Natural killer cell (primary cell): ENCODE measurements at regions of chrX and their contacts with region 1.

Region 1: GRCh38 chrX:24498975-24499374 is 33.9 kb downstream of the PDK3 start:
- DNase-seq: peak in 1 of 2 donors; percentile 67
- ATAC-seq: peak; percentile 77 to 88 (median 78)
- H3K4me3 ChIP-seq: peak overlapping the region; percentile 3
- H3K4me3 Mint-ChIP-seq: peak overlapping the region; percentile 55
- H3K27ac ChIP-seq: peak overlapping the region; percentile 54
- H3K27ac Mint-ChIP-seq: peak overlapping the region; percentile 73 to 83
- H3K4me1 ChIP-seq: peaks cover 13% of the 10 kb centered on the region
- H3K4me1 Mint-ChIP-seq: peaks cover 22 to 26% of the 10 kb centered on the region in 2 donors
- H3K27me3 ChIP-seq: no peaks in the 10 kb centered on the region
- H3K27me3 Mint-ChIP-seq: no peaks in the 10 kb centered on the region
- CTCF ChIP-seq: peak; percentile 30

Region 2: DNA sequence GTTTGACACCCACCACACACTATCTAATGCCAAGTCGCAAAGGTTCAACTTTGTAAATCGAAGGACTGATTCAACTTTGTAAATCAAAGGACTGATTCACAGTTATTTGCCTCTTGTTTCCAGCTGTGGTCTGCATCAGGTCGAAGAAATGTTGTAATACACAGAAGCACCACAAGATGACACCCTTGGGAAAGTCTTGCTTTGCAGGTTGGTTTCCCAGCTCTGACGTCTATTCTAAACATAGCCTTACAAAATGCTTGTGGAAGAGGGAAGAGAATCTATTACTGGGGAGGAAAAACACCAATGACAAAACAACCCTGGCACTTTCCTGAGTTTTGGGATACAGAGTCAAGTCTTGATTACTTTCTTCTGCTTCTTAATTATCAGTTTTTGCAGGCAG is 103.2 kb before region 1 on chrX:
- intact Hi-C with region 1: loop called (anchors 1 kb)
- DNase-seq: peak in 1 of 2 donors; percentile 81
- ATAC-seq: peak; percentile 65 to 93 (median 91)
- H3K4me3 ChIP-seq: no peak overlapping the region
- H3K4me3 Mint-ChIP-seq: no peak overlapping the region
- H3K27ac ChIP-seq: no peak overlapping the region
- H3K27ac Mint-ChIP-seq: peak overlapping the region in 1 of 2 donors; percentile 21
- H3K4me1 ChIP-seq: no peaks in the 10 kb centered on the region
- H3K4me1 Mint-ChIP-seq: peaks cover 0 to 5% of the 10 kb centered on the region in 2 donors
- H3K27me3 ChIP-seq: no peaks in the 10 kb centered on the region
- H3K27me3 Mint-ChIP-seq: peaks cover 6 to 50% of the 10 kb centered on the region in 2 donors
- CTCF ChIP-seq: peak; percentile 69

Region 3: GRCh38 chrX:24464836-24465531 is 34.0 kb before region 1 on chrX and contains the start of gene PDK3:
- intact Hi-C with region 1: loop called (anchors 2 kb)
- DNase-seq: peak; percentile 82 to 93
- ATAC-seq: peak; percentile 92 to 98 (median 94)
- H3K4me3 ChIP-seq: peak within 1 kb of the TSS; percentile 84
- H3K4me3 Mint-ChIP-seq: peak within 1 kb of the TSS; percentile 88
- H3K27ac ChIP-seq: peak within 1 kb of the TSS; percentile 96
- H3K27ac Mint-ChIP-seq: peak within 1 kb of the TSS; percentile 72 to 90
- H3K4me1 ChIP-seq: peaks cover 16% of the 10 kb centered on the region
- H3K4me1 Mint-ChIP-seq: peaks cover 27 to 32% of the 10 kb centered on the region in 2 donors
- H3K27me3 ChIP-seq: no peaks in the 10 kb centered on the region
- H3K27me3 Mint-ChIP-seq: no peaks in the 10 kb centered on the region
- CTCF ChIP-seq: no peak
- total RNA-seq, gene PDK3: 21.9 to 30.9 (median 28.1) TPM

Region 4: GRCh38 chrX:24479924-24480323 is 19.1 kb before region 1 on chrX:
- intact Hi-C with region 1: loop called (anchors 2 kb)
- DNase-seq: peak; percentile 56 to 92
- ATAC-seq: peak; percentile 88 to 97 (median 93)
- H3K4me3 ChIP-seq: peak overlapping the region; percentile 37
- H3K4me3 Mint-ChIP-seq: peak overlapping the region; percentile 84
- H3K27ac ChIP-seq: peak overlapping the region; percentile 98
- H3K27ac Mint-ChIP-seq: peak overlapping the region; percentile 95 to 96
- H3K4me1 ChIP-seq: peaks cover 34% of the 10 kb centered on the region
- H3K4me1 Mint-ChIP-seq: peaks cover 53 to 57% of the 10 kb centered on the region in 2 donors
- H3K27me3 ChIP-seq: no peaks in the 10 kb centered on the region
- H3K27me3 Mint-ChIP-seq: no peaks in the 10 kb centered on the region
- CTCF ChIP-seq: no peak